ENCODE measurements at regions of chr17 and their contacts with region 1.

Region 1: DNA sequence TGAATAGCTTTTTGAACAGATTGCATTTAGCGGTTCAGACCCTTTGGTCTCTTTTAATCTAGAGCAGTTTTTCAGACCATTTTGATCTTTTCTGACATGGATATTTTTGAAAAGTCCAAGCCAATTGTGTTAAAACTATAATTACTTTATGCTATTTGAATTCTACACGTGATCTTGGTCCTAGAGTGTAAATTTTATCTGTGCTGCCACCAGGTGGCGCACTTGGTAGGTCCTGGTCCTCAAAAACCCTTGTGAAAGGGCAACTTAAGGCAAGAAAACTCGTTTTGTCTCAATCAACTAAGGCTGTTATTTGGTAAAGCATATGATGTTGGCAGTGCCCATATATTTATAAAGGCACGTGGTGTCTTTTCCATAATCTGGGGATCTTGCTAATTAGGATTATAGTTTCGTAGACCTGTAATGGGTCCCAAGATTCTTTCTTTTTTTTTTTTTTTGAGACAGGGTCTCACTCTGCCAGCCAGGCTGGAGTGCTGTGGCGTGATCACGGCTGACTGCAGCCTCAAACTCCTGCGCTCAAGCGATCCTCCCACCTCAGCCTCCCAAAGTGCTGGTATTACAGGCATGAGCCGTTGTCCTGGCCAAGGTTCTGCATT is 43.9 kb upstream of the TEX2 start:
- DNase-seq: no peak
- H3K4me3 ChIP-seq: no peak overlapping the region
- H3K27ac ChIP-seq: no peak overlapping the region
- H3K4me1 ChIP-seq: no peaks in the 10 kb centered on the region
- H3K27me3 ChIP-seq: no peaks in the 10 kb centered on the region
- CTCF ChIP-seq: peak; percentile 72 to 85 (median 73)
- POLR2A ChIP-seq: no peak

Region 2: GRCh38 chr17:64240741-64241347 is 66.1 kb before region 1 on chr17:
- intact Hi-C with region 1: no loop called
- DNase-seq: peak in 1 of 2 donors; percentile 94
- H3K4me3 ChIP-seq: no peak overlapping the region
- H3K27ac ChIP-seq: peak overlapping the region; percentile 69
- H3K4me1 ChIP-seq: peaks cover 23% of the 10 kb centered on the region
- H3K27me3 ChIP-seq: no peaks in the 10 kb centered on the region
- CTCF ChIP-seq: no peak
- POLR2A ChIP-seq: no peak

Region 3: GRCh38 chr17:64291254-64291851 is 15.6 kb before region 1 on chr17:
- intact Hi-C with region 1: no loop called
- DNase-seq: no peak
- H3K4me3 ChIP-seq: no peak overlapping the region
- H3K27ac ChIP-seq: no peak overlapping the region
- H3K4me1 ChIP-seq: no peaks in the 10 kb centered on the region
- H3K27me3 ChIP-seq: no peaks in the 10 kb centered on the region
- CTCF ChIP-seq: no peak
- POLR2A ChIP-seq: no peak

Region 4: DNA sequence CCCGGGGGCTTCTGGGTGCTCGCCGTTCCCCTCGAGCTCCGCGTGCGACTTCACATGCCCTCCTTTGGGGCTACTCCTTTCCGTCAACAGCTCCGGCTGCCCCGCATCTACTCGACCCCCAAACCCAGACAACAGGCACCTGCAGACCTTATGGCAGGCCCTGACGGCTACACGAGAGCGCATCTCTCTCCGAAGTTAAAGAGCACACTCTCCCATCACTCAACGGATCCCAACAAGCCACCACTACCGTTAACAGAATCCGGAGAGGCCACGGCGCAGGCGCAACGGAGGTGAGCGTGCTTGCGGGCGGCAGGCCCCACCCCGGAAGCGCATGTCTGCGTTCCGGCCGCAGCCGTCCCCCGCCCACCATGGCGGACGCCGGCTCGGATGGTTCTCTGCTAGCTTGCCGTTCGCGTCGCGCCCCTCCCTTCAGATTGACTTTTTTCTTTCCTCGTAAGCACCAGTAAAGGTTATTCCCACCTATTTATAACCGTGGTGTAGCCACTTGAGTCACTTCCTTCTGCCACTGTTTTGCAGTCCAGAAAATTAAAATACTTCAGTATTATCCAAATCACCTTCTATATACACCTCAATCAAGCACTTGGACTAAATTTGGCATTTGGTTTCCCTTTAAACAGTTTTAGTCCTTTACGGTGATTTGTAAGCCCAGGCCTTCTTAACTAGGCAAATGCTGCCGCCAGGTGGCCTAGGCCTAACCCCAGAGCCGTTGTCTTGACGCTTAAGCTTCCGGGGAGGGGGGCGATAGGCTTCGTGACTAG is 190.0 kb after region 1 on chr17 and contains the start of gene POLG2:
- intact Hi-C with region 1: loop called (anchors 10 kb)
- DNase-seq: peak in 1 of 2 donors; percentile 89
- H3K4me3 ChIP-seq: peak within 1 kb of the TSS; percentile 71 to 78
- H3K27ac ChIP-seq: peak within 1 kb of the TSS; percentile 78
- H3K4me1 ChIP-seq: peaks cover 71% of the 10 kb centered on the region
- H3K27me3 ChIP-seq: no peaks in the 10 kb centered on the region
- CTCF ChIP-seq: peak in 1 of 3 experiments; percentile 34
- POLR2A ChIP-seq: no peak
- total RNA-seq, gene POLG2: 16.7 TPM